Endothelial cell of umbilical vein (primary cell): ENCODE measurements at regions of chr11 and their contacts with region 1.

Region 1: GRCh38 chr11:33700425-33701271 is at the start of gene C11orf91:
- DNase-seq: peak; percentile 98
- H3K4me3 ChIP-seq: peak within 1 kb of the TSS in 2 of 3 experiments; percentile 8 to 38
- H3K27ac ChIP-seq: peak within 1 kb of the TSS; percentile 89
- H3K4me1 ChIP-seq: peaks cover 52% of the 10 kb centered on the region
- H3K27me3 ChIP-seq: no peaks in the 10 kb centered on the region
- CTCF ChIP-seq: no peak
- POLR2A ChIP-seq: peak; percentile 88
- total RNA-seq, gene C11orf91: 1.4 and 2.1 TPM in 2 replicates

Region 2: DNA sequence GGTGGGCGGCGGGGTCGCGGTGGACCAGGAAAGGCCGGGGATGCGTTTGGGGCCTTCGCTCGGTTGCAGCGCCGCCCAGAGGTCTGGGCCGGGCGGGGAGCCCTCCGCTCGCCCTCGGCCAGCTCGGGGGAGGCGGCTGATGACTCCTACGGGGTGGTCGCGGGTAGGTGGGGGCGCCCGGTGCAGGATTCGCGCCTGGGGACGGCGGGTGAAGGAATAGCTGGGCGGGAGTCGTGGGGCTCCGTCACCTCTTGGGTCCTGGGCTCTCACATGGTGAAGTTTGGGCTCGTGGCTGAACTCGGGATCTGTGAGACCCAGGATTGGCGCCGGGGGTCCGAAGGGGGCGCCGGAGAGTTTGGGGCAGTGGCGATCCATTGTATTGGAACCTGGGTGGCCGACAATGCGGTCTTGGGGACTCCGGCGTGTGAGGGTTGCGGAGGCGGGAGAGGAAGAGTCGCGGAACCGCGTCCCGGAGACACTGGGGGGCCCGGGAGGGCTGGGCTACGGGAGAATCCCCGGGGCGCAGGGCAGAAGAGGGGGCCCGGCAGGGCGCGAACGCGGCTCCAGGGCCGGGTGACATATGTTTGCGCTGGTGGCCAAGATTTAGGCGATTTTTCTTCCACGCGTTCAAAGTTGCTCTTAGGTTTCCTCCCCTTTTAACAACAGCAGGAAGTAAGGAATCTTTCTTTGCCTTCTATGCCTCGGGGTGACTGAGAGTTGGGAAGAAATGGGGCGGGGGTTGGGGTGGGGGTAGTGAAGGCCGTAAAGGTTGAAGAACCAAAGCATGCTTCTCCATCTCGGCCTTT is 807.1 kb before region 1 on chr11:
- CTCF ChIA-PET with region 1: no interaction called
- POLR2A ChIA-PET with region 1: no interaction called
- dilution Hi-C with region 1: no loop called
- intact Hi-C with region 1: loop called (anchors 5 kb)
- DNase-seq: peak; percentile 56
- H3K4me3 ChIP-seq: peak overlapping the region; percentile 82 to 98 (median 93)
- H3K27ac ChIP-seq: peak overlapping the region; percentile 89
- H3K4me1 ChIP-seq: peaks cover 13% of the 10 kb centered on the region
- H3K27me3 ChIP-seq: no peaks in the 10 kb centered on the region
- CTCF ChIP-seq: peak; percentile 45 to 55
- POLR2A ChIP-seq: no peak

Region 3: GRCh38 chr11:33716236-33716635 is 15.6 kb after region 1 on chr11:
- CTCF ChIA-PET with region 1: interaction called, 19 read pairs
- POLR2A ChIA-PET with region 1: no interaction called
- dilution Hi-C with region 1: no loop called
- intact Hi-C with region 1: no loop called
- DNase-seq: peak; percentile 66
- H3K4me3 ChIP-seq: no peak overlapping the region
- H3K27ac ChIP-seq: peak overlapping the region; percentile 0
- H3K4me1 ChIP-seq: peaks cover 29% of the 10 kb centered on the region
- H3K27me3 ChIP-seq: no peaks in the 10 kb centered on the region
- CTCF ChIP-seq: peak; percentile 27 to 41
- POLR2A ChIP-seq: no peak

Region 4: GRCh38 chr11:33722579-33723225 is 22.1 kb after region 1 on chr11:
- CTCF ChIA-PET with region 1: interaction called, 7 read pairs
- POLR2A ChIA-PET with region 1: interaction called, 6 read pairs
- dilution Hi-C with region 1: no loop called
- intact Hi-C with region 1: loop called (anchors 1 kb)
- DNase-seq: peak; percentile 69
- H3K4me3 ChIP-seq: no peak overlapping the region
- H3K27ac ChIP-seq: peak overlapping the region; percentile 99
- H3K4me1 ChIP-seq: peaks cover 60% of the 10 kb centered on the region
- H3K27me3 ChIP-seq: no peaks in the 10 kb centered on the region
- CTCF ChIP-seq: no peak
- POLR2A ChIP-seq: no peak

Region 5: DNA sequence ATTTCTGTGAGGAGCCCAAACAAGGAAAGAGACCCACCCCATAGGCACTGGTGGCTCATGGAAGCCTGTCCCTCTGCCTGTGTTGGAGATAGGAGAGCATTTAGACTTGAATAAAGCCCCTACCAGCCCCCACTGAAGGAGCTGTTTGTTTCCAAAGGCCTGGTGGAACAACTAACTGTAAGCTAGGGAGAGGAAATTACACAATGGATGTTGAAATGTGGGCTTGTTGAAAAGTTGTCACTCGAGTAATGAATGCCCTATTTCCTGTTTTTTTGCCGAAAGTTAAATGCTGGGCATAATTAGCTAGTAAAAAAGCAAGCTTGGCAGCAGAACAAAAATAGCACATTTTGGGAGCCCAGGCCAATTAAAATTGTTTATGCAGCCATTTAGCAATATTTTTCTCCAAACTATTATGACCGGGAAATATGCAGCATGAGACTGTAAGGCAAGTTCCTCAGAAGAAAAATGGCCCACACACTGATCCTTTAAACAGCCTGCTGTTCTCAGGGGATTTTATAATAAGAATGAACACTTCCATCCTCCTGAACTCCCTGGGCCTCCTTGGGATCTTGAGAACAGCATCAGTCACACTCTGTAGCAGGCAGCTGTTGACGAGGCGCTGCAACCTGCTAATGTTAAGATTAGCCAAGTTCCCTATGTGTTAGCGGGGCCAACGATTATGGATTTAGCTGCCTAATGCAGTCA is 229.8 kb after region 1 on chr11:
- CTCF ChIA-PET with region 1: no interaction called
- POLR2A ChIA-PET with region 1: no interaction called
- dilution Hi-C with region 1: no loop called
- intact Hi-C with region 1: loop called (anchors 5 kb)
- DNase-seq: peak; percentile 98
- H3K4me3 ChIP-seq: peak overlapping the region in 1 of 3 experiments; percentile 15
- H3K27ac ChIP-seq: peak overlapping the region; percentile 97
- H3K4me1 ChIP-seq: peaks cover 48% of the 10 kb centered on the region
- H3K27me3 ChIP-seq: no peaks in the 10 kb centered on the region
- CTCF ChIP-seq: no peak
- POLR2A ChIP-seq: peak; percentile 68